ENCODE measurements at regions of chr2 and their contacts with region 1.

Region 1: DNA sequence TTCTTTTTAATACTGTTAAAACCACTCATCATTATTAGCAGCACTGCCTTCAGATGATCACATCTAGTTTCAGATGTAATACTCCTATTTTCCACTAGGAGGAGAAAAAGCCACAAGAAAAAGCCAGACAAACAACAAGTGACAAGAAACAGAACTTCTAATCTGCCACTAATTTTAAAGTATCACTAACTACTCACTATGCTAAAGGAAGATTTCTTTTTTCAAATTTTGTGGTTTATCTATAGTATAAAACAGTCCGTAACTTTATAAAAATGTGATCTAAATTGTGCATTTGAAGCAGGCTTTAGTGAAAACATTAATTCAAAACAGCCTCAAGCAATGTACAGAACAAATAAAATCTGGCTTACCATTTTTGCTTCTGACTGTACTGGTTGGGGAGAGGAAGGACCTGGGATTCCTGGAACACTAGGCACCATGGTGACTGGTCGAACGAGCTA is 56.8 kb downstream of the ATF2 start:
- DNase-seq: no peak
- ATAC-seq: peak in 1 of 2 donors; percentile 58
- H3K4me3 ChIP-seq: no peak overlapping the region
- H3K27ac ChIP-seq: no peak overlapping the region
- H3K4me1 ChIP-seq: no peaks in the 10 kb centered on the region
- H3K27me3 ChIP-seq: no peaks in the 10 kb centered on the region
- CTCF ChIP-seq: peak; percentile 49 to 76 (median 60)
- POLR2A ChIP-seq: no peak

Region 2: GRCh38 chr2:173631127-173631460 is 1480.1 kb before region 1 on chr2:
- in situ Hi-C with region 1: no loop called
- intact Hi-C with region 1: no loop called
- DNase-seq: no peak
- ATAC-seq: no peak
- H3K4me3 ChIP-seq: no peak overlapping the region
- H3K27ac ChIP-seq: no peak overlapping the region
- H3K4me1 ChIP-seq: no peaks in the 10 kb centered on the region
- H3K27me3 ChIP-seq: no peaks in the 10 kb centered on the region
- CTCF ChIP-seq: no peak
- POLR2A ChIP-seq: no peak

Region 3: DNA sequence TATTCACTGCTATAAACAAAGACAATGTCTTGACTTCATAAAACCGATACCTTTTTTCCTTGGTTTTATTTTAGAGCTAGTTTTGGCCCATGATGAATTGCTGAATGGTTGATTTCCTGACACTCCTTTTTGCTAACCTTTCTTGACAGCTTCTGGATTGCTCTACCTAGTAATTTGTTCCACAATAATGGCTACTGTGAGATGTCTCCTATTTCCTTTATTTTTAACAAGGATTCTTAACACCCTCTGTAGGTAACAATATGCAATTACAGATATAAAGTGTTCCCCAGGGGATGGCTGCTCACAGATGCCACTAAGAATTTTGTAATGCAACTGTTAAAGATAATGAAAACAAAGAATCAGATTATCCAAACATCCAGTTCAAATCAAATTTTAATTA is 171.1 kb after region 1 on chr2:
- in situ Hi-C with region 1: loop called in 1 of 4 experiments (anchors 10 kb)
- intact Hi-C with region 1: loop called (anchors 5 kb)
- DNase-seq: no peak
- ATAC-seq: peak in 1 of 2 donors; percentile 64
- H3K4me3 ChIP-seq: no peak overlapping the region
- H3K27ac ChIP-seq: no peak overlapping the region
- H3K4me1 ChIP-seq: no peaks in the 10 kb centered on the region
- H3K27me3 ChIP-seq: no peaks in the 10 kb centered on the region
- CTCF ChIP-seq: peak in 3 of 5 experiments; percentile 30 to 48 (median 33)
- POLR2A ChIP-seq: no peak

Measured in gastrocnemius medialis (tissue), 4 donors.